AG04449 (cell line): ENCODE measurements at regions of chr19 and their contacts with region 1.

Region 1: DNA sequence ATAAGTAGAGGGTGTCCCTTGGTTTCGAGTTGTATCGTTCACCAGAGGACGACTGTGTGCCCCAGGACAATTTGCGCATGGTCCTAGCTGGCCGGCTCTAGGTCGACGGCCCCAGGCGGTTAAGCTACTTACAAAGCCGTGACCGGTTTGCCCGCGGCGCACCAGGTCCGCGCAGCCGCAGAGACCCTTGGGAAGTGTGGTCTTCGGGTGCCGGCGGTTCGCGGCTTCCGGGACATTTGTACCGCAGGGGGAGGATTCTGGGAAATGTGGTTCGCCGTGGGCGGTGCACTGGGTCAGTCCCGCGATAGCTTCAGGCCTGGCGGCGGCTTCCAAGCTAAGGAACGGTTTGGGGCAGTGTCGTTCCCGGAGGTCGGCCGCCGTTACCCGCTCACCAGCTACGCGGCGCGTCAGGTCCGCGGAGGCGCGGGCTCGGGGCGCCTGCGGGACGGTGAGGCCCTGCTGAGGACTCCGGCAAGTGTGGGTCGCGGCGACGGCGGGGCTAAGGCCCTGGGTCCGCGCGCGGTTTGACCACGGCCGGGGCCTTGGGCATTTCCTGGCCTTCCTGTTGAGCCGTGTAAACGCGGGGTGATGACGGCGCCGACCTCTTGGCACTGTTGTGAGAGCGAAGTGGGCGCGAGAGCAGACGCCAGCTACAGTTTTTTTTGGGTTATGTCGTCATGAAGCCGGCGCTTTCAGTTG is at the start of gene ZNF302:
- DNase-seq: peak; percentile 80
- H3K4me3 ChIP-seq: peak within 1 kb of the TSS; percentile 77
- CTCF ChIP-seq: no peak

Region 2: GRCh38 chr19:34733826-34734600 is 56.5 kb after region 1 on chr19 and contains the start of gene ZNF181:
- CTCF ChIA-PET with region 1: no interaction called
- POLR2A ChIA-PET with region 1: interaction called, 13 read pairs
- DNase-seq: peak; percentile 36
- H3K4me3 ChIP-seq: peak within 1 kb of the TSS; percentile 79
- CTCF ChIP-seq: no peak